Psoas muscle (tissue), 8 donors: ENCODE measurements at regions of chr11 and their contacts with region 1.

Region 1: GRCh38 chr11:76919887-76920746 is 59.4 kb downstream of the ACER3 start:
- DNase-seq: peak; percentile 62 to 81
- ATAC-seq: peak; percentile 69 to 94 (median 80)
- H3K4me3 ChIP-seq: no peak overlapping the region
- H3K27ac ChIP-seq: no peak overlapping the region
- H3K4me1 ChIP-seq: no peaks in the 10 kb centered on the region
- H3K27me3 ChIP-seq: no peaks in the 10 kb centered on the region
- CTCF ChIP-seq: peak; percentile 91

Region 2: DNA sequence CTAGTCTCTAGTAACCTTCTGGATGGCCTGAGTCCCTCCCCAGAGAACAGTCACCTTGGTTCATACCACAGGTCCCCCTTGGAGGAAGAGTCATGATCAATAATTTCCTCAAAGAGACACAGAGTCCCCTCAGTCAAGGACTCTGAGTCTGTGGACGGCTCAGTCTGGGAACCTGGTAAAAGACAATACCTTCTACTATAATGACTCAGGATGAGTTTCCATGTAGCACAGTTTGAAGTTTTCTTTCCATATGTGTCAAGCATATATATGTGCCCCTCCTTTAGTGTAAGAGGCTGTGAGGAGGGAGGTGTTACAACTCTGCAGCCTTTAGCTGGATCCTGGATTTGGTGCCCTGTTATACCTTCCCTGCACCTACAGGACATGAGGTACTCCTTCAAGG is 191.3 kb before region 1 on chr11:
- intact Hi-C with region 1: loop called (anchors 2 to 10 kb)
- DNase-seq: no peak
- ATAC-seq: no peak
- H3K4me3 ChIP-seq: no peak overlapping the region
- H3K27ac ChIP-seq: no peak overlapping the region
- H3K4me1 ChIP-seq: no peaks in the 10 kb centered on the region
- H3K27me3 ChIP-seq: peaks cover 0 to 7% (median 0%) of the 10 kb centered on the region in 3 donors
- CTCF ChIP-seq: no peak

Region 3: DNA sequence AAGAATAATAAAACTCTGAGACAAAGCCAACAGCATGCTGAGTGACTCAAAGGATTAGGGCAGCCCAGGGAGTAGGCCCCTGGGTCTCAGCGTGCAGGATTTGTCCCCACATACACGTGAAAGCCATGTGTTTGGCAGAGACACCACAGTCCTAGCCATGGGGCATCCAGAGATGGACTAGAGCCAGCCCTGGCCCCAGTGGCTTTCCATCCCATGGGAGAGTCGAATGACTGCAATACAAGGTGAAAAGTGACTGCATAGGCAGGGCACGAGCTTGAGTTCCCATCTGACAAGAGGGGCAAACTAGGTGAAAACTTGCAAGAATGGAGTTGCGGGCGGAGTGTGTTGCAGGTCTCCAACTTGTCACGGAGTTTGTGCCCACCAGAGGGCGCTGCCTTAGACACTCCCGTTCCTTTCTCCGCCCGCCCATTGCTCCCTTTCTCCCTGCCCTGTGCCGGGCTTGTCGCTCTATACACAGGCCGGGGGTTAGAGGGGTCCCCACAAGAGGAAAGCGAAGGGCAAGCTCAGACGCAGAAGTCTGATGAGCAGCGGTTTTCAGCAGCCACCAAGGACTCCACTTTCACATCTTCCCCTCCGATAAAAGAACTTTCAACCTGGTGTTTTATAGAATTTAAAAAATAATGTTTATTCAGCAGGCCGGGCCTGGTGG is 112.8 kb before region 1 on chr11:
- intact Hi-C with region 1: loop called (anchors 2 kb)
- DNase-seq: peak; percentile 88 to 93
- ATAC-seq: peak; percentile 90 to 93 (median 91)
- H3K4me3 ChIP-seq: peak overlapping the region; percentile 12
- H3K27ac ChIP-seq: no peak overlapping the region
- H3K4me1 ChIP-seq: no peaks in the 10 kb centered on the region
- H3K27me3 ChIP-seq: no peaks in the 10 kb centered on the region
- CTCF ChIP-seq: peak; percentile 80

Region 4: GRCh38 chr11:77039491-77040400 is 119.6 kb after region 1 on chr11:
- intact Hi-C with region 1: loop called in 1 of 2 experiments (anchors 10 kb)
- DNase-seq: peak in 1 of 2 donors; percentile 43
- ATAC-seq: peak; percentile 48 to 89 (median 75)
- H3K4me3 ChIP-seq: peak overlapping the region; percentile 57
- H3K27ac ChIP-seq: no peak overlapping the region
- H3K4me1 ChIP-seq: peaks cover 10% of the 10 kb centered on the region
- H3K27me3 ChIP-seq: peaks cover 0 to 68% (median 7%) of the 10 kb centered on the region in 3 donors
- CTCF ChIP-seq: peak; percentile 38

Region 5: DNA sequence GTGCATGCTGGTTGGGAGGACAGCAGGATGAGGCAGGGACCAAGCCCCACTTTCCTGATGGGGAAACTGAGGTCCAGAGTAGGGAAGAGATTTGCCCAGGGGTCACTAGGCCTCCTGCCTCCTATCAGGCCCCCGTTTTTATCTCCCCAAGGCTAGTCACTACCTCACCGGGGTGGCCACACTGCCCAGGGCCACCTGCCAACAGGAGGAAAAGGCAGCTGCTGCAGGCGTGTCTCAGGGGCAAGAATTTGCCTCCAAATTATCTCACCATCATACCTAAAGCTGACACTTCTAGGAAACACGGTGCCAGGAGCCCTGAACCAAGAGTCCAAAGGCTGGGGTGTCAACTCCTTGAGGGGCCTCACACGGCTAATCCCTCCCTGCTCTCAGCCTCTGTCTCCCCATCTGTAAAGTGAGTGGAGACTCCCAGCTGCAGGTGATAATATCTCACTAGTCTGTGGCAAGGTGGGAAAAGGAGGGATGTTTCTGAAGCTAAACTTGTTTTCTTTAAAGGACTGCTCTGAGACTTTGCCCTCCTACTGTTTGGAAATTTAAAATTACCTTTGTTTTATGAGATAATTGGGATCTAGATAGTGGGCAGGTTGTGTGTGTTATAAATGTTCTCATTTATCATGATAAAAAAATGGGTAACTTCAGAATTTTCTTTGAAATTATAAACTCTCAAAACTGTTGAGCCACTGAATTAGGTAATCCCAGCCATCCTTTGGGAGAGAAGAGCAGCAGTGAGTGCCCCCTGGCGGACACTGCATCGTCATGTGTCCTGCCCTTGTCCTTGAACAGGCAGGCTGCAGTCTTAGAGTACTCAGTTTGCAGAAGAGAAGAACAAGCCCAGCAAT is 267.9 kb after region 1 on chr11:
- intact Hi-C with region 1: loop called in 1 of 2 experiments (anchors 10 kb)
- DNase-seq: peak; percentile 82 to 89
- ATAC-seq: peak; percentile 87 to 96 (median 92)
- H3K4me3 ChIP-seq: no peak overlapping the region
- H3K27ac ChIP-seq: no peak overlapping the region
- H3K4me1 ChIP-seq: no peaks in the 10 kb centered on the region
- H3K27me3 ChIP-seq: no peaks in the 10 kb centered on the region
- CTCF ChIP-seq: peak; percentile 91